A549 (cell line): ENCODE measurements at regions of chr19 and their contacts with region 1.

Region 1: DNA sequence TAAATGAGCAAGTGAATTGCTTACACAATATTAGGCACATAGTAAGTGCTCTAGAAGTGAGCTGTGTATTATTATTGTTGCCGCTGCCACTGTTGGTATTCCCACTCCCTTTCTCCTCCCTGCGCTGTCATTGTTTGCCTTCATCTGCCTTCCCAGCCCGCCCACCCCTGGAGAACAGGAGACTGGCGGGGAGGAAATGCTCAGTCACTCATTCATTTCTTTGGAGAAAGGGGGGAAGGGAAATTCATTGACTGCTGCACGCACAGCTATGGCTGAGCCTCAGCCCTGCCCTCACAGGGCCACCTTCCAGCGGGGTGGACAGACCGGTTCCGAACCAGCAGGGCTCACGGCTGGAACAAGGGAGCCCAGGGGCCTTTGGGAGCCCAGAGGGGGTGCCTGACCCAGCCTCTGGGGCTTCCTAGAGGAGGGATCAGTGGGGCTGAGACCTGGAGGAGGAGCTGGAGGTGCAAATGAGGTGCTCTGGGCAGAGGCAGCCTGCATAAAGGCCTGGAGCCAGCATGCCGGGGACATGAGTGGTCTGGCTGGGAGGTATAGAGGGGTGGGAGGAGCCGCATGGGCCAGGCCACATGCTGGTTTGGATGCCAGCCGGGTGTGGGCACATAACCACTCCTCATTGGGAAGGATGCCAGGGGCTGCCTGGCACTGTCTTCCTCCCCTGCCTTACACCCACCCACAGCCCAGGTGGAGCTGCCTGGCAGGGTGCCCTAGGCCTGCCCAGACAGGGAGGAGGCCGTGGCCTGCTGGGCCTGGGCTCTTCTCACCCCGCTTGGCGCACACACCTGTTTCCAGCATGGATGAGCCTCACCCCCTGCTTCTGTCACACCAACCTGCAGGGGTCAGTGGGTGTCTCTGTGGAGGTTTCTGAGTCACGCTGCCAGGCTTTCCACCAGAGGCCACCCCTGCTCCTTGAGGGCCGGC is 26.8 kb downstream of the PPP5C start:
- DNase-seq: peak; percentile 88 to 93
- ATAC-seq: peak; percentile 80 to 87
- H3K4me3 ChIP-seq: peak overlapping the region; percentile 21; the same call in 2 of the 3 replicates
- H3K27ac ChIP-seq: peak overlapping the region; percentile 90 to 94
- H3K4me1 ChIP-seq: peaks cover 49% of the 10 kb centered on the region
- CTCF ChIP-seq: peak; percentile 19; the same call in 1 of the 3 replicates
- EP300 ChIP-seq: peak in 1 of 2 experiments; percentile 6; a peak in 1 of 5 replicates
- POLR2A ChIP-seq: peak; percentile 21
- RAD21 ChIP-seq: no peak; a peak in 1 of 5 replicates

Region 2: DNA sequence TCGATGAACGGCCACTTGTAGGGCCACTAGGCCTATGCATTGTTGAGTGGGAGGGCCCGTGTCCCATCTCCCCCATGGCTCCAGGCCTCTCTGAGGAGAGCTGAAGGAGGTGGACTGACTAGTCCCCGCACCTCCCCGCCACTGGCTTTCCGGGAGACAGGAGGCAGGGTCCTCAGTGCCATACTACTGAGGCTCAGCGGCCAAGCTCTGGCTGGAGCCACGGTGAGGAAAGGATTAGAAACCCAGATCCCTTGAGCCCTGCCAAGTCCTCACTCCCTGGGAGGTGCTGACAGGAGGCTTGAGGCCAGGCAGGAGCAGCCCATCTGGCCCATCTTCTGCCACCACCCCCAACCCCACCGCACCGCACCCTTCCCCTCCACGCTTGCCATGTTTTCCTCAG is 10.7 kb after region 1 on chr19:
- CTCF ChIA-PET with region 1: interaction called, 13 read pairs
- POLR2A ChIA-PET with region 1: interaction called, 8 read pairs
- DNase-seq: no peak
- ATAC-seq: no peak
- H3K4me3 ChIP-seq: no peak overlapping the region
- H3K27ac ChIP-seq: no peak overlapping the region
- H3K4me1 ChIP-seq: no peaks in the 10 kb centered on the region
- CTCF ChIP-seq: no peak
- EP300 ChIP-seq: no peak
- POLR2A ChIP-seq: no peak
- RAD21 ChIP-seq: no peak